ENCODE measurements at regions of chr7 and their contacts with region 1.

Region 1: GRCh38 chr7:132882714-132883428 is 199.0 kb downstream of the CHCHD3 start:
- DNase-seq: no peak
- H3K4me3 ChIP-seq: no peak overlapping the region
- CTCF ChIP-seq: no peak
- POLR2A ChIP-seq: no peak

Region 2: DNA sequence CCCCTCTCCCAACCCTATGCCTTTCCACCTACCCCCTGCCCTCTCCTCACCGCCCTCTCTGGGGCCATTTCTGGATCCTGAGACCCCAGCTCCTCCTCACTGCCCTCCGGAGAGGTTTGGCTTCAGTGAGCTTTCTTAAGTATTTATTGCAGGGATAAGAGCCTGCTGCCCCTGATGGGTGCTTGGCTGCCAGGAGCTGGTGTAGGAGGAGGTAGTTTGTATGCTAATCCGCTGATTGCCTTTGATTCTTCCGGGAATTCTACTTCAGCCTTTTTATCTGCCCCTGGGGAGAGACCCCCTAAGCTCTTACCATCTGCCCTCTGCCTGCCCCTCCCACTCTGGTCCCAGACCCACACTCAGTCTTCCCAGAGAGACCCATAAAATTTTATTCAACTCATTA is 1063.0 kb before region 1 on chr7:
- intact Hi-C with region 1: loop called (anchors 5 kb)
- DNase-seq: no peak
- H3K4me3 ChIP-seq: no peak overlapping the region
- CTCF ChIP-seq: no peak
- POLR2A ChIP-seq: no peak